K562 (cell line): ENCODE measurements at regions of chr1 and their contacts with region 1.

Region 1: DNA sequence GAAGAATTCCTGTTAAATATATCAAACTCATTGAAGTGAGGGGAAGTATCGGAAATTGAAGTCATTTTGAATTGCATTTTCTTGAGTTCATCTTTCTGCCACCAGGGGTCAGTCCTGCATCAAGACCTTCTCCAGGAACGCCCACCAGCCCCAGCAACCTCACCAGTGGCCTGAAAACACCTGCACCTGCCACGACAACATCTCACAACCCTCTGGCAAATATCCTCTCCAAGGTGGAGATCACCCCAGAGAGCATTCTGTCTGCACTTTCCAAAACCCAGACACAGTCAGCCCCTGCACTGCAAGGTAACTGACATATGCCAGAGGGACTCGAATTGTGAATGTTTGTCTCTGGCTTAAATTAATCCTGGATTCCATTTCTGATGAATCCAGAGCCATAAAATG is 22.8 kb upstream of the TARS2 start:
- DNase-seq: peak; percentile 67 to 84 (median 77)
- ATAC-seq: peak; percentile 85
- H3K4me3 ChIP-seq: no peak overlapping the region
- H3K27ac ChIP-seq: no peak overlapping the region
- H3K4me1 ChIP-seq: no peaks in the 10 kb centered on the region
- H3K27me3 ChIP-seq: no peaks in the 10 kb centered on the region
- CTCF ChIP-seq: peak; percentile 75 to 82 (median 81)
- EP300 ChIP-seq: no peak
- POLR2A ChIP-seq: no peak
- RAD21 ChIP-seq: peak; percentile 75 to 81

Region 2: DNA sequence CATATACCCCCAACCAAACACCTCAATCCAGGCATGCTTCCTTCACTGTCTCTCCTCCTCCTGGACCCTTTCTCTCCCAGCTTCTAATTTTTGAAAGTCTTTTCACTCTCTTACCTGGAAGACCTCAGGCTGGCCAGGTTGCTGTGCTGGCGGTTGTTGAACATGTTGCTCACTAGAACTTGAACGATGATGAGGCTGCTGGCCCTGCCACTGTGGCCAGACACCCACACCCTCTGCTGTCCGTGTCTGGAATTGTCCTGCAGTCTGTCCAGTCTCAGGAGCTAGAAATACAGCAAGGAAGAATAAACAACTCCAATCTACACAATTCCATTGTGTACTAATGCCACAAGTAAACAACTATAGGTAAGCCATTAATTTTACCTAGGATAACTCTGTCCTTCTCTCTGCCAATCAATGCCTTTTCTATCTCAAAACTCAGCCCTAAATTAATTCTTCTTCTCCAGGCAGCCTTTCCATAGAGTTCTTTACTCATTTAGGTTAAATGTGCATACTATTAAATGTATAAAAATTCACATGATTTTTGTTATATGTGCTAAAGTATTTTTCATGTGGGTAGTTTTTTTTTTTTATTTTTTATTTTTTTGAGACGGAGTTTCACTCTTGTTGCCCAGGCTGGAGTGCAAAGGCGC is 348.8 kb after region 1 on chr1:
- CTCF ChIA-PET with region 1: interaction called, 3 read pairs
- POLR2A ChIA-PET with region 1: no interaction called
- in situ Hi-C with region 1: no loop called
- intact Hi-C with region 1: loop called (anchors 5 kb)
- DNase-seq: peak; percentile 37 to 78 (median 57)
- ATAC-seq: peak; percentile 98
- H3K4me3 ChIP-seq: no peak overlapping the region
- H3K27ac ChIP-seq: no peak overlapping the region
- H3K4me1 ChIP-seq: peaks cover 0 to 8% of the 10 kb centered on the region in 2 experiments; a peak in 1 of 5 replicates
- H3K27me3 ChIP-seq: no peaks in the 10 kb centered on the region
- CTCF ChIP-seq: peak; percentile 86 to 92 (median 90)
- EP300 ChIP-seq: no peak
- POLR2A ChIP-seq: no peak
- RAD21 ChIP-seq: peak; percentile 85 to 95